T-cell (primary cell): ENCODE measurements at regions of chr7 and their contacts with region 1.

Region 1: DNA sequence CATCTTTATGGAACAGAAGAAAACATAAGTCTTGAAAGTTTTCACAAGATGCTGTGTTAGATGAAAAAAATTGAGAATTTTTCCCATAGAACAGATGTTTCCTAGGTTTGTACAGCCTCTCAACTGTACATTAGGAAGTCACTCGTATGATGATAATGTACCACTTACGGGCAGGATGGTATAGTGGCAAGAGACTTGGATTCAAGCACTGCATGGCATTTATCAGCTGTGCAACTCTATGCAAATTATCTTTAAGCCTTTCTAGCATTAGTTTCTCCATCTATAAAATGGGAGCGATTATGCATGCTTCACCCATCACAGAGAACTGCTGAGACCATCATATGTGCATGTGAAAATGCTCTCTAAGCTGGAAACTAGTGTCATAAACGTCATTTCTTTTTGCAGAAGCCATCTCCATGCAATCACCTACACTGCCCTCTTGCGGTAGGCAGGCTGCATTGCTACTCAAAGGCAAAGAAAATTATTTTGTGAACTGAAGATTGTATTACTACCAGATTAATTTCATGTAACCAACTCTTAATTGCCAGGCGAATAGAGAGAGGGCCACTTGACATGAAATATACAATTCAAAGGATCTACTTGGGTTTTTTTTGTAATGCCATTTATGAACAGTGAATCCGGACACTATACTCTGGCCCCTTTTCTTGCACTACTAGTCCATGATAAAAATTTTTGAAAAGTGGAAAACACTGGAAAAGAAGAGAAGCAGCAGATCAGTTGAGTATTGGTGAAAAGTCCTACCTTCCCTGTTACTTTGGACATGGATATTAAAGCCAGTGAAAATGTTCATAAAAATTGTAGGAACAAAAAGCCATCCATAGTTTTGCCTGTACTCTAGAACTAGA is 102.3 kb downstream of the JAZF1 start:
- DNase-seq: peak in 30 of 35 experiments; percentile 8 to 70 (median 34)
- ATAC-seq: peak in 2 of 4 experiments; percentile 43 to 76
- H3K4me3 ChIP-seq: no peak overlapping the region
- H3K4me3 Mint-ChIP-seq: no peak overlapping the region
- H3K27ac ChIP-seq: no peak overlapping the region
- H3K27ac Mint-ChIP-seq: no peak overlapping the region
- H3K4me1 ChIP-seq: peaks cover 0 to under 1% of the 10 kb centered on the region in 2 experiments
- H3K4me1 Mint-ChIP-seq: peaks cover 5 to 18% (median 8%) of the 10 kb centered on the region in 3 donors
- H3K27me3 ChIP-seq: no peaks in the 10 kb centered on the region
- H3K27me3 Mint-ChIP-seq: no peaks in the 10 kb centered on the region

Region 2: DNA sequence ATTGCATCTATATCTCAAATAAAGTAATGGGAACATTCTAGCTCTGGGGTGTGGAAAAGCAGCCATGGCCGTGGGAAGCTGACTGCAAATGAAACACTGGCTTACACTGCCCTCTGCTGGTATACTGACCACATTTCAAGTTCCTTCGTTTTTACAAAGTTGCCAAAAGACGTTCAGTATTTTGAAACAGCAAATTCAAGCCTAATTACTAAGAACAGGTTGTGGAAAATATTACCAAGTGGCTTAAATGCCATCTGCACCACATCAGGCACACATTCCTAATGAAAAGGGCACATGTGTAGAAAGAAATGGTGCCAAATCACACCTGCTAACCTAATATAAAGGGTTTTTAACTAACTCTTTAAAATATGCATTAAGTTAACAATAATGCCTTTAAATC is 18.4 kb after region 1 on chr7:
- CTCF ChIA-PET with region 1: interaction called, 6 to 14 read pairs
- POLR2A ChIA-PET with region 1: no interaction called
- DNase-seq: peak in 26 of 35 experiments; percentile 1 to 74 (median 21)
- ATAC-seq: peak in 3 of 4 experiments; percentile 36 to 54 (median 53)
- H3K4me3 ChIP-seq: no peak overlapping the region
- H3K4me3 Mint-ChIP-seq: no peak overlapping the region
- H3K27ac ChIP-seq: no peak overlapping the region
- H3K27ac Mint-ChIP-seq: no peak overlapping the region
- H3K4me1 ChIP-seq: no peaks in the 10 kb centered on the region
- H3K4me1 Mint-ChIP-seq: peaks cover 0 to 15% (median 6%) of the 10 kb centered on the region in 3 donors
- H3K27me3 ChIP-seq: no peaks in the 10 kb centered on the region
- H3K27me3 Mint-ChIP-seq: no peaks in the 10 kb centered on the region

Region 3: DNA sequence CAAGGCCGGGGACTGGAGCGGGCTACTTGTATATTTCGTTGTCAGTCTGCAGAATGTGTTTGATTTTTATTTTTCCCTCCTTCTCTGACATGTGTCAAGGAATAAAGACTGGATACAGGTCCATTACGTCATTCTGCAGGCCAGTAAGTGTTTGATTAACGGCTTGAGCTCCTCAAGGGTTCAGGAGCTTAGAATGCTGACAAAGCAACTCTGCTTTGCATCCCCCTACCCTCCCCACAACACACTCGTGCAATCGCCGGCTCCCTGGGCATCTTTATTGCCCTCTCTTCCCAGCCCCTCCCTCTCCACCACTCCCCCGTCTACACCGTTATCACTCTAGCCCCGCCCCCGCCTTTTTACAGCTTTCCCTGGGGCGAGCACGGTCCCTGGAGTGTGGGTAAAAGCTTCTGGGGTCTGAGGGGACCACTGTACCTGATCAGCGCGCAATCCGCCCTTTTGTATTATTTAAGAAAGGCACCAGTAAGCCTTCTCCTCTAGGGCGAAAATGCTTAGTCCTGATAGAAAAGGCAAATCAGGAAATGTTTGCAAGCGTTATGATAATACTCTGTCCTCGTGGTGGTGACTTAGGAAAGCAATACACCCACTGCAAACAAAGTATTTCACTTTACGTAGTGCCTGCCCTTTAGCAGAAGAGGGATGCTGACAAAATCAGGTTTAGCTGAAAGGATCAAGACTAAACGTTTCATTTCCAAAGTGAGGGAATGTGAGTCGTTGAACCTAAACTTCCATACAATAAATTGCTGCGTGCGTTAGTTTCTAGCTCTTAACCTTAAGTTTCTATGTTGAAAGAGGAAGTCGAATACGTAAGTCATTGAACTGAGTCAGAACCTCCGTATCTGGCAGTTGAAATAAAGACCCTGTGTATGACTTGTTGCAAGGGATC is 332.6 kb after region 1 on chr7:
- CTCF ChIA-PET with region 1: interaction called in 1 of 2 experiments, 10 read pairs
- POLR2A ChIA-PET with region 1: no interaction called
- DNase-seq: peak in 1 of 35 experiments; percentile 6
- ATAC-seq: peak in 1 of 4 experiments; percentile 42
- H3K4me3 ChIP-seq: peak overlapping the region; percentile 12 to 63
- H3K4me3 Mint-ChIP-seq: peak overlapping the region; percentile 62 to 87 (median 66)
- H3K27ac ChIP-seq: no peak overlapping the region
- H3K27ac Mint-ChIP-seq: no peak overlapping the region
- H3K4me1 ChIP-seq: peaks cover 7 to 23% of the 10 kb centered on the region in 2 experiments
- H3K4me1 Mint-ChIP-seq: peaks cover 20 to 27% (median 23%) of the 10 kb centered on the region in 3 donors
- H3K27me3 ChIP-seq: peaks cover 17 to 31% of the 10 kb centered on the region in 2 experiments
- H3K27me3 Mint-ChIP-seq: peaks cover 67 to 77% of the 10 kb centered on the region in 2 donors